ENCODE measurements at regions of chr1 and their contacts with region 1.

Region 1: DNA sequence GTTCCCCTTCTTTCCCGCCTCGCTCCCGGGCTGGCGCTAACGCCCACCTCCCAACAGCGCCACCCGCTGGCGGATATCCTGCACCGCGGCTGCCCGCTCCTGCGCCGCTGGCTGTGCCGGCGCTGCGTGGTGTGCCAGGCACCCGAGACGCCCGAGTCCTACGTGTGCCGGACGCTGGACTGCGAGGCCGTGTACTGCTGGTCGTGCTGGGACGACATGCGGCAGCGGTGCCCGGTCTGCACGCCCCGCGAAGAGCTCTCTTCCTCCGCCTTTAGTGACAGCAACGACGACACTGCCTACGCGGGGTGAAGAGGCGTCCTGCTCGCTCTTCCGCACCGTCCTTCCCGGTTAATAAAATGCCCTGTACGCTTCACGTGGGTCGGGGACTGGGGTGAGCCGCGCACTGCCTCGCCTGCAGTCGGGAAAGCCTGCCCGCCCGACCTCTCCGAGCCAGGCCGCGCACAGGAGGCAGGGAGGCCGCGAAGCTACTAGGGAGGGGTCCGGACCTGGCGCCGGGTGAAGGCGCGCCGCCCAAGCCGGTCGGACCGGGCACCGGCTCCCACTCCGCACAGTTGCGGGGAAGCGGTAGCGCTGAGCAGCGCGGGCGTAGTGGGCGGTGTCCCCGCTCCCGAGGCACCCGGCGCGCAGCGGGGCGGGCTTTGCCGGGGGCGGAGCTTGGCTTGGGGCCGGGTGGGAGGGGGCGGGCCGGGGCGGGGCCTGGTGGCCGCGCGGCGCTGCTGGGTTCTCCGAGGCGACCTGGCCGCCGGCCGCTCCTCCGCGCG is at the start of gene ADAM15:
- DNase-seq: peak; percentile 74 to 79 (median 77)
- H3K4me3 ChIP-seq: peak within 1 kb of the TSS; percentile 69 to 92
- H3K4me3 Mint-ChIP-seq: peak within 1 kb of the TSS; percentile 86 to 92 (median 88)
- H3K27ac ChIP-seq: peak within 1 kb of the TSS; percentile 71
- H3K27ac Mint-ChIP-seq: peak within 1 kb of the TSS; percentile 70 to 93 (median 90)
- H3K4me1 ChIP-seq: peaks cover 27% of the 10 kb centered on the region
- H3K4me1 Mint-ChIP-seq: peaks cover 14 to 33% (median 27%) of the 10 kb centered on the region in 4 donors
- H3K27me3 ChIP-seq: no peaks in the 10 kb centered on the region
- H3K27me3 Mint-ChIP-seq: no peaks in the 10 kb centered on the region
- total RNA-seq, gene ADAM15: 33.6 to 39.8 TPM

Region 2: GRCh38 chr1:154955718-154956543 is 94.8 kb before region 1 on chr1 and contains the start of gene PBXIP1:
- CTCF ChIA-PET with region 1: interaction called, 9 read pairs
- POLR2A ChIA-PET with region 1: interaction called, 31 read pairs
- intact Hi-C with region 1: no loop called
- DNase-seq: peak; percentile 92 to 94 (median 92)
- H3K4me3 ChIP-seq: peak within 1 kb of the TSS; percentile 80 to 90
- H3K4me3 Mint-ChIP-seq: peak within 1 kb of the TSS; percentile 94 to 100 (median 98)
- H3K27ac ChIP-seq: peak within 1 kb of the TSS; percentile 100
- H3K27ac Mint-ChIP-seq: peak within 1 kb of the TSS; percentile 98 to 100 (median 100)
- H3K4me1 ChIP-seq: peaks cover 75% of the 10 kb centered on the region
- H3K4me1 Mint-ChIP-seq: peaks cover 43 to 87% (median 74%) of the 10 kb centered on the region in 4 donors
- H3K27me3 ChIP-seq: no peaks in the 10 kb centered on the region
- H3K27me3 Mint-ChIP-seq: no peaks in the 10 kb centered on the region
- total RNA-seq, gene PBXIP1: 435 to 438 TPM

Region 3: GRCh38 chr1:154982897-154983648 is 67.7 kb before region 1 on chr1 and contains the start of gene FLAD1:
- CTCF ChIA-PET with region 1: interaction called, 4 read pairs
- POLR2A ChIA-PET with region 1: interaction called, 13 read pairs
- intact Hi-C with region 1: loop called (anchors 2 kb)
- DNase-seq: peak; percentile 96 to 99 (median 96)
- H3K4me3 ChIP-seq: peak within 1 kb of the TSS; percentile 79 to 92
- H3K4me3 Mint-ChIP-seq: no peak within 1 kb of the TSS
- H3K27ac ChIP-seq: peak within 1 kb of the TSS; percentile 76
- H3K27ac Mint-ChIP-seq: peak within 1 kb of the TSS in 1 of 7 donors; percentile 92
- H3K4me1 ChIP-seq: peaks cover 27% of the 10 kb centered on the region
- H3K4me1 Mint-ChIP-seq: peaks cover 4 to 8% (median 6%) of the 10 kb centered on the region in 4 donors
- H3K27me3 ChIP-seq: no peaks in the 10 kb centered on the region
- H3K27me3 Mint-ChIP-seq: no peaks in the 10 kb centered on the region
- total RNA-seq, gene FLAD1: 52.4 to 56.6 TPM

Region 4: DNA sequence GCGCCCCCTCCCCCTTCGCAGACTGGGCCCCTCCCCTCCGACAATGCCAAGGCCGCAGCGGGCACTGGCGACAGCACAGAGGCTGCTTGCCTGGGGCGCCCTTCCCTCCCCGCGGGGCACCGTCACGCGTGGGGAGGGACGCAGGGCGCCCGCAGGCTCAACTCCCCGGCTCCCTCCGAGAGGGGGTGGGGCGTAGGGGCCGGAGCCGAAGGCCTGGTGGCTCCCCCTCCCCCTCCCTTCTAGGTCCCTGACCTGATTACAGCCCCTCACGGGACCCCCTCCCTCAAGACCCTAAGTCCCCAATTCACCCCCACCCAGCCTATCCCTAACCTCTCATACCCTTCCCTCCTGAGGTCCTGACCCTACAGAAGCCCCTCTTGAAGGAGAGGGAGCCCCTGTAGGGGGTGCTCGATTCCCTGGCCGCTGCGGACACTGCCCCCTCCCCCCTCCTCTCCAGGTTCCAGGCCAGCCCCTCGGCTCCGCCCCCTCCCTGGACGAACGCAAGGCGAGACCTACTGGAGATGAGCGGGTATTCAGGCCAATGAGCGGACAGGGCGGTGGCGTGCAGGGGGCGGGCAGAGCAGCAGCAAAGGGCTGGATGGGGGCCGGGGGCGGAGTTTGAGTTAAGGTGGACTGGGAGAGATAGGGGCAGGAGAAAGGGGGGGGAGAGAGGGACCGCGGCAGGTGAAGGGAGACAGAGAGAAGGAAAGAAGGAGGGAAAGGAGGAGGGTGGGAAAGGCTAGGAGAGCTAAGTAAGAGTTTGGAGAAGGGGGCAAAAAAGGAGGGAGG is 48.9 kb before region 1 on chr1:
- CTCF ChIA-PET with region 1: interaction called, 10 read pairs
- POLR2A ChIA-PET with region 1: interaction called, 8 read pairs
- intact Hi-C with region 1: loop called (anchors 5 kb)
- DNase-seq: peak; percentile 95 to 98 (median 97)
- H3K4me3 ChIP-seq: peak overlapping the region; percentile 78 to 80
- H3K4me3 Mint-ChIP-seq: peak overlapping the region; percentile 88 to 99 (median 96)
- H3K27ac ChIP-seq: peak overlapping the region; percentile 92
- H3K27ac Mint-ChIP-seq: peak overlapping the region; percentile 90 to 99 (median 95)
- H3K4me1 ChIP-seq: peaks cover 59% of the 10 kb centered on the region
- H3K4me1 Mint-ChIP-seq: peaks cover 39 to 78% (median 51%) of the 10 kb centered on the region in 4 donors
- H3K27me3 ChIP-seq: no peaks in the 10 kb centered on the region
- H3K27me3 Mint-ChIP-seq: no peaks in the 10 kb centered on the region

Region 5: DNA sequence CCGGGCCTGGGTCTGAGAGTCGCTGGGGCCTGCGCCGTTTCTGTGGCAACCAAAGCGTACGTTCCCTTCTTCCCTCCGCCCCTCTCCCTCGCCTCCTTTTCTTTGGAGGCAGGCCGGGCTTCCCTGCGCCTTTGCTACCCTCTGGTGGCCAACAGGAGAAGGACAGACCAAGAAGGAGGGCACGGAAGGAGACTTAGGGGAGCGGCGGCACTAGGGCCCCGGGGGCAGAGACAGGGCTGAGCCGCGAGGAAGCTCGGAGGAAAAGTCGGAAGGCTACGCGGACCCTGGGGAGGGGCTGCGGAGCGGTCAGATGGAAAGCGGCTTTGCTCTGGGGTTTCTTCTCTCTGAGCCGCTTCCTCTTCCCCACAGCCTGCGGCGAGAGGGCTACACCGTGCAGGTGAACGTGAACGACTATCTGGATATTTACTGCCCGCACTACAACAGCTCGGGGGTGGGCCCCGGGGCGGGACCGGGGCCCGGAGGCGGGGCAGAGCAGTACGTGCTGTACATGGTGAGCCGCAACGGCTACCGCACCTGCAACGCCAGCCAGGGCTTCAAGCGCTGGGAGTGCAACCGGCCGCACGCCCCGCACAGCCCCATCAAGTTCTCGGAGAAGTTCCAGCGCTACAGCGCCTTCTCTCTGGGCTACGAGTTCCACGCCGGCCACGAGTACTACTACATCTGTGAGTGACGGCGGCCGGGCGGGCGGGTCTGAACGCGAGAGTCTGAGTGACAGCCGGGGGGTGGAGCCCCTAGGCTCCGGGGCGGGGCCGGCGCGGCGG is 34.2 kb after region 1 on chr1:
- CTCF ChIA-PET with region 1: interaction called, 63 read pairs
- POLR2A ChIA-PET with region 1: interaction called, 21 read pairs
- intact Hi-C with region 1: loop called (anchors 1 kb)
- DNase-seq: peak; percentile 92 to 96 (median 92)
- H3K4me3 ChIP-seq: peak overlapping the region; percentile 80 to 95
- H3K4me3 Mint-ChIP-seq: peak overlapping the region; percentile 91 to 98 (median 94)
- H3K27ac ChIP-seq: peak overlapping the region; percentile 54
- H3K27ac Mint-ChIP-seq: peak overlapping the region; percentile 88 to 98 (median 94)
- H3K4me1 ChIP-seq: peaks cover 57% of the 10 kb centered on the region
- H3K4me1 Mint-ChIP-seq: peaks cover 22 to 44% (median 34%) of the 10 kb centered on the region in 4 donors
- H3K27me3 ChIP-seq: peaks cover 34% of the 10 kb centered on the region
- H3K27me3 Mint-ChIP-seq: peaks cover 13 to 30% of the 10 kb centered on the region in 2 donors